Dorsolateral prefrontal cortex (tissue), 120 donors: ENCODE measurements at regions of chr15 and their contacts with region 1.

Region 1: GRCh38 chr15:63891079-63891767 is 57.5 kb upstream of the HERC1 start:
- DNase-seq: peak; percentile 64 to 89 (median 83)
- H3K4me3 ChIP-seq: no peak overlapping the region
- H3K27ac ChIP-seq: peak overlapping the region in 1 of 59 donors; percentile 27
- H3K27me3 ChIP-seq: no peaks in the 10 kb centered on the region
- CTCF ChIP-seq: peak; percentile 70 to 95 (median 88)

Region 2: GRCh38 chr15:62483814-62484213 is 1407.4 kb before region 1 on chr15:
- intact Hi-C with region 1: no loop called
- DNase-seq: no peak
- H3K4me3 ChIP-seq: no peak overlapping the region
- H3K27ac ChIP-seq: no peak overlapping the region
- H3K27me3 ChIP-seq: no peaks in the 10 kb centered on the region
- CTCF ChIP-seq: no peak

Region 3: GRCh38 chr15:63610200-63610841 is 280.9 kb before region 1 on chr15:
- intact Hi-C with region 1: loop called (anchors 2 to 5 kb)
- DNase-seq: peak; percentile 53 to 91 (median 77)
- H3K4me3 ChIP-seq: peak overlapping the region in 11 of 59 donors; percentile 1 to 27 (median 7)
- H3K27ac ChIP-seq: peak overlapping the region; percentile 74 to 97 (median 93)
- H3K27me3 ChIP-seq: no peaks in the 10 kb centered on the region
- CTCF ChIP-seq: peak; percentile 63 to 91 (median 82)

Region 4: DNA sequence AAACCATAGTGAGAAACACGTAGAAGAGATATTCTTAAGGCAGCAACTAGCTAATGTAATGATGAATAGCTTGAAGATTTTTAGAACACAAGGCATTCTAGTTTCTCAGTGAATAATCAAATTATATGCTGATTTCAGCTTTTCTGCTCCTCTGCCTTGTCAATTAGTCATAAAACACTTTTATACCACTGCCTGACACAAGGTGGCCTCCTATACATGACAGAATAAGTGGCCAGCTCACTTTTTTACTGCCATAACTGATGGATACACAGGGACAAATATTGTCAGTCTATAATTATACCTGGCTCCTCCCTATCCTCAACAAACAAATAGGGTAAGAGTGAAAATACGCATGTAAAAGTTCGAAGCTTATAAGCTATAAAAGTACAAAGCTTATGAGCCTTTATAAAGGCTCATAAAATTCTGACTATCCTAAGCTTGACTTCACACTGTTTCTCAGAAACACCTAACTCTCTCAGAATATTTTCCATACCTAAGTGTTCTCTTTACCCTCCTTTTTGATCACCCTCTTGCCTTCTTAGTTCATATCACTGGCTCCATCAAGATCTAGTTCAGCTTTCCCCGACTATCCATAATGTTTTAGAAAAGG is 139.0 kb before region 1 on chr15:
- intact Hi-C with region 1: loop called (anchors 2 to 5 kb)
- DNase-seq: peak in 1 of 10 donors; percentile 23
- H3K4me3 ChIP-seq: no peak overlapping the region
- H3K27ac ChIP-seq: peak overlapping the region in 4 of 59 donors; percentile 2 to 56 (median 35)
- H3K27me3 ChIP-seq: no peaks in the 10 kb centered on the region
- CTCF ChIP-seq: peak; percentile 37 to 95 (median 77)

Region 5: DNA sequence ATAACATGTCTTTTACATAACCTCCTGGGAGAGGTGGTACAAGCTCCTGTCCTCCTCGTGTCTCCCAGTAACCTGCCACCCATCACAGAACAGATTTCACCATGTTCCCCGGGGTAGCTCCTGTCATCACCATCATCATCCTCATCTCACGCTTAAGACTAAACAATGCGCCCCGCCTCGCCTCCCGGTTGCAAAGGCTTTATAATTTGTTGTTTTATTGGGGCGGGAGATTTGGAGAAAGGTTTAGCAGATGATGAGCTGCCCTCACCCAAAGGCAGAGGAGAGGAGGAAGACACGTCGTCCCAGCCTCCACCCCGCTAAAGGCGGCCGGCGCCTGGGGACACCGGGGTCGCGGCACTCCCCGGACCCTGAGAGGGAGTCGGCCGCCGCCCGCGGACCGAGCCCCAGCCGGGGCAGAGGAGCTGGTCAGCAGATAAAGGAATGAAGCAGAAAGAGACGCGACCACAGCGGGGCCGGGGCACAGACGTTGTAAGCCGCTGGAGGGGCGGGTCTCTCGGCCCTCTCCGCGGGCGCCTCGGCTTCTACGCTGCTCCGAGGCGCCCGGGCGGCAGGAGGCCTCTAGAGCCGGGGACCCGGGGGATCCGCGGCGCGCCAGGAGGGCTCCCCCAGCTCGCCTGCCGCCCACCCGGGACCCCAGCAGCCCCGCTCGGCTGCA is 58.1 kb before region 1 on chr15:
- intact Hi-C with region 1: loop called in 1 of 2 experiments (anchors 2 kb)
- DNase-seq: peak in 5 of 10 donors; percentile 3 to 61 (median 32)
- H3K4me3 ChIP-seq: peak overlapping the region; percentile 54 to 98 (median 90)
- H3K27ac ChIP-seq: peak overlapping the region; percentile 28 to 97 (median 92)
- H3K27me3 ChIP-seq: no peaks in the 10 kb centered on the region
- CTCF ChIP-seq: no peak

Region 6: GRCh38 chr15:63950911-63951481 is 59.8 kb after region 1 on chr15:
- intact Hi-C with region 1: no loop called
- DNase-seq: no peak
- H3K4me3 ChIP-seq: no peak overlapping the region
- H3K27ac ChIP-seq: peak overlapping the region in 4 of 59 donors; percentile 6 to 61 (median 24)
- H3K27me3 ChIP-seq: no peaks in the 10 kb centered on the region
- CTCF ChIP-seq: no peak

Region 7: GRCh38 chr15:64067564-64068030 is 176.4 kb after region 1 on chr15:
- intact Hi-C with region 1: loop called in 1 of 2 experiments (anchors 5 kb)
- DNase-seq: peak in 6 of 10 donors; percentile 59 to 75 (median 65)
- H3K4me3 ChIP-seq: peak overlapping the region in 2 of 59 donors; percentile 16 to 27
- H3K27ac ChIP-seq: no peak overlapping the region
- H3K27me3 ChIP-seq: no peaks in the 10 kb centered on the region
- CTCF ChIP-seq: peak; percentile 69 to 96 (median 89)